Heart right ventricle (tissue), 16 donors: ENCODE measurements at regions of chr14 and their contacts with region 1.

Region 1: GRCh38 chr14:101854366-101854765 is 92.9 kb downstream of the PPP2R5C start:
- DNase-seq: no peak
- ATAC-seq: peak in 2 of 8 donors; percentile 5 to 18
- H3K4me3 ChIP-seq: no peak overlapping the region
- H3K27ac ChIP-seq: peak overlapping the region in 9 of 10 donors; percentile 26 to 87 (median 67)
- H3K4me1 ChIP-seq: peaks cover 7 to 99% (median 72%) of the 10 kb centered on the region in 9 donors
- H3K27me3 ChIP-seq: no peaks in the 10 kb centered on the region
- CTCF ChIP-seq: no peak

Region 2: DNA sequence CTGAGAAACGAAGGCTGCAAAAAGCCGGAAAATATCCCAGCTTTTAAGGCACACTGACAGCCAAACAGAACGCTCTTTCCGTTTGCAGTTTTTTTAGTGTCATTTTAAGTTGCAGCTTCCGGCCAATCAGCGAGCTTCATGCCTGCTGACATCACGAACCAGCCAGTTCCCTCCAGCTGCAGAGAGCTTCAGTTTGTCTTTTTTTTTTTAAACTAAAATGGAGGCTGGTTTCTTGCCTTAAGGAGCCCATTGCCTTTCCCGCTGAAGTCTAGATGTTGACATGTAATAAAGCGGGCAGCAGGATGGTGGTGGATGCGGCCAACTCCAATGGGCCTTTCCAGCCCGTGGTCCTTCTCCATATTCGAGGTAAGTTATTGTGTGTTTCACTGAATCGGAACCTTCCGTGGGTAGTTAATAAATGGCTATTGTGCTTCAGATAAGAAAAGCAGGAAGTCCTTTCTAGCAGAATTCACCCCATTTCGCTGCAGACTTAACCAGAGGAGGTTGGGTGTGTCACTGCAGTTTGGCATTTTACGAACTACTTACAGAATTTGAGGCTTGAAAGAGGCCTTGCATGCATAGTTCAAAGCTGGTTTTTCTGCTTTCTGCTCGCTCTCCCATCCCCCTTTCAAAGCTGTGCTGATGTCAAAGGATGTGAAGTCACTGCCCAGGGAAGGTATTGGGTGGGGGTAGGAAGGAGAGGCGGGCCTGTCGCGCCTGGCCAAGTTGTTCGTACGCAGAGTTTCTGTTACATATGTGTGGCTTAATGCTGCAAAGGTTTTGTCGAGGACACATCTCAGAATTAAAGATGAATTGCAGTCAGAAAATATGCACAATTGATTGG is 44.5 kb before region 1 on chr14:
- intact Hi-C with region 1: loop called in 1 of 10 experiments (anchors 5 kb)
- DNase-seq: peak; percentile 71 to 92
- ATAC-seq: peak; percentile 93 to 97 (median 94)
- H3K4me3 ChIP-seq: peak overlapping the region; percentile 46 to 81 (median 62)
- H3K27ac ChIP-seq: peak overlapping the region; percentile 88 to 100 (median 95)
- H3K4me1 ChIP-seq: peaks cover 15 to 62% (median 56%) of the 10 kb centered on the region in 9 donors
- H3K27me3 ChIP-seq: no peaks in the 10 kb centered on the region
- CTCF ChIP-seq: no peak